ENCODE measurements at regions of chr7 and their contacts with region 1.

Region 1: DNA sequence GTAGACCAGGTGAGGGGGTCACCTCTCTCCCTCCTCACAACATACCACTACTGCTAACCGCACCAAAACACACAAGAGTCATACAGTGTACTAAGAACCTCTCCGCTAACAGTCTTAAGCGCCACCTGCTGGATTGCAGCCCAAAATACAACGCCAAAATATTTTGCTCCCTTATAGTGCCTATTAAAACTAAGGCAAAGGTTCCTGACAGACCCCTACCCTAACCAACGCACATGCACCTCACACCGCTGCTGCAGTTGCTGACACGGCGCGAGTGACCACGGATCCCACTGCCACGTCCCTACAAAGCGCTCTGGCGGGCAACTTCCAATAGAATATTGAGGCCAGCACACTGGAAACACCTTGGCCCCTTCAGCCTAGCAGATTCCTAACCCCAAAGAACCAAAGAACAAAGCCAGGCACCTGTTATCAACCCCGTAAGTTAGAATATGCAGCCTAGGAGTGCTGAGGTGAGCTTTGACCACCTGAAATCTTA is 563.6 kb upstream of the SEMA3D start:
- DNase-seq: peak; percentile 49
- H3K4me3 ChIP-seq: no peak overlapping the region; a peak in 1 of 4 replicates
- H3K27ac ChIP-seq: no peak overlapping the region
- H3K4me1 ChIP-seq: no peaks in the 10 kb centered on the region
- H3K27me3 ChIP-seq: no peaks in the 10 kb centered on the region
- CTCF ChIP-seq: peak; percentile 81
- EP300 ChIP-seq: no peak
- RAD21 ChIP-seq: peak; percentile 88

Region 2: DNA sequence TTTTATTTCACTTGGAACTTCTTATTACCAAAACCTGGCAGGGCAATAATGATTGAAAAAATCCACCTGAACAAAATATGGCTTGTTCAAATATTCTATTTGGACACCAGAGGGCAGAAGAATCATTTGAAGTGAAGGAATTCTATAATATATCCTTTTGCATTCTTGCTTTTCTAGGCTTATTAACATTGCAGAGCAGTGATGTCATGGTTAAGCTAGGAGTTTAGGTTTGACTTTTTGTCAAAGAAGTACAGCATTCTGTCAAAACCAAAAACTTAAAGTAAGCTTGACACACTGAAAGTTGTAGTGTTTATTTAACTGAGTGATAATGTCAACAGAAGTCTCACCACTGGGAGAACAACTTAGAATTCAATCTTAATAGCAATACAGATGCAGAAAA is 719.6 kb before region 1 on chr7:
- CTCF ChIA-PET with region 1: interaction called, 19 read pairs
- POLR2A ChIA-PET with region 1: no interaction called
- DNase-seq: peak; percentile 1
- H3K4me3 ChIP-seq: no peak overlapping the region
- H3K27ac ChIP-seq: no peak overlapping the region
- H3K4me1 ChIP-seq: peaks cover 0 to 5% of the 10 kb centered on the region in 2 experiments; a peak in 2 of 4 replicates
- H3K27me3 ChIP-seq: no peaks in the 10 kb centered on the region
- CTCF ChIP-seq: peak; percentile 95
- EP300 ChIP-seq: no peak
- RAD21 ChIP-seq: peak; percentile 78

Region 3: DNA sequence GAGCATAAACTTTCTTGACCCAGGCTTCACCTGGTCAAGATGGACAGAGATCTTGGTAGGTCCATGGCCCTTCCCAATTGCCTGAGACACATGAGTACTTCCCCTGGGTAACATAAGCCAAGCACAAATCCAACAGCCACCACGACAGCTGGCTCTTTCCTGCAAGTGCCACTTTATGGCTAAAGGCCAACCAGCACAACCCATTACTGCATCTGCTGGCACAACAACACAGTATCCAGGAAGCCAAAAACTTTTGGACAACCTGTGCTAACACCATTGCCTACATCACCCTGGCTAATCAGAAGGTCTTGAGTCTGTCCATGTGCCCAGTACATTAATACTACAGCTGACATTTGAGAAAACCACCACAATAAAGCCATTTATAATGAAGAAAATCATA is 15.7 kb before region 1 on chr7:
- CTCF ChIA-PET with region 1: interaction called, 15 read pairs
- POLR2A ChIA-PET with region 1: no interaction called
- DNase-seq: no peak
- H3K4me3 ChIP-seq: no peak overlapping the region
- H3K27ac ChIP-seq: no peak overlapping the region
- H3K4me1 ChIP-seq: no peaks in the 10 kb centered on the region
- H3K27me3 ChIP-seq: no peaks in the 10 kb centered on the region
- CTCF ChIP-seq: no peak
- EP300 ChIP-seq: no peak
- RAD21 ChIP-seq: no peak

Region 4: GRCh38 chr7:85765698-85766298 is 15.3 kb after region 1 on chr7:
- CTCF ChIA-PET with region 1: interaction called, 10 read pairs
- POLR2A ChIA-PET with region 1: no interaction called
- DNase-seq: no peak
- H3K4me3 ChIP-seq: no peak overlapping the region
- H3K27ac ChIP-seq: no peak overlapping the region
- H3K4me1 ChIP-seq: no peaks in the 10 kb centered on the region; a peak in 1 of 4 replicates
- H3K27me3 ChIP-seq: no peaks in the 10 kb centered on the region
- CTCF ChIP-seq: no peak
- EP300 ChIP-seq: no peak
- RAD21 ChIP-seq: no peak

Measured in SK-N-SH (cell line).